Common myeloid progenitor, CD34-positive (primary cell): ENCODE measurements at regions of chr11 and their contacts with region 1.

Region 1: DNA sequence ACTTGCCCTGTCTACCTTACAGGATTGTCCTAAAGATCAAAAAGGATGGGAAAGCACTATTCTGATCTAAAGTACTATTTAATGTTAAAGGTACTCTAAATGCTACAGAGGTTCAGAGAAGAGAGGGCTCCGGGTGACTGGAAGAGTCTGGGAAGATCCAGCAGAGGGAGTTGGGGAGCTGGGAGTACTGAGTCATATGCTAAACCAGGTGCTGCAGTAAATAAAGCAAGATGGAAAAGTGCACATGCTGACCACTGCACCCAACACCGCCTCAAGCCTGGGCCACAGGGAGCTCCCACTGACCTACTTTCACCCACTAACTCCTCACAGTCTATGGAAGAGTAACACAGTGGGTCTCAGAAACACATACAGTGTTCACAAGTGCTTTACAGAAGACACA is 49.3 kb downstream of the WT1 start:
- DNase-seq: peak; percentile 28 to 39 (median 35)
- H3K4me3 ChIP-seq: peak overlapping the region in 2 of 7 experiments; percentile 42 to 44
- H3K27ac ChIP-seq: peak overlapping the region in 1 of 2 experiments; percentile 62
- H3K4me1 ChIP-seq: peaks cover 16 to 28% (median 19%) of the 10 kb centered on the region in 4 experiments
- H3K27me3 ChIP-seq: no peaks in the 10 kb centered on the region

Region 2: DNA sequence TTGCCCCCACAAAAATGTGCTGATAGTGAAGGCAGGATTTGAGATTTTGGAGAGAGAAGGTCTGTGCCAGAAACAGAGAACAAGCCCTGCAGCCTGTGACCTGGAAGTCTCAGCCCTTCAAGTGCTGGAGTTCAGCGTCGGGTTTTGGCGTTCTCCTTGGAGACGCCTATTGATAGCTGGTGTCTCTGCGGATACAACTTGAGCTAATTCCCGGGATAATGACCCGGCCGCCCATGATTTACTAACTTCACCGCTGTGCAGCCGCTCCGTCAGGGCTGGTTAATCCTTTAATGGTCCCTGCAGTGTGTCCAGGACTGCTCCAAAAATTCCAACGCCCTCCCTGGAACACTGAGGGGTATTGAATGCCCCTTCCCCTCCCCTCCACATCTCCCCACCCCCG is 27.3 kb before region 1 on chr11:
- CTCF ChIA-PET with region 1: no interaction called
- POLR2A ChIA-PET with region 1: no interaction called
- DNase-seq: no peak
- H3K4me3 ChIP-seq: no peak overlapping the region
- H3K27ac ChIP-seq: no peak overlapping the region
- H3K4me1 ChIP-seq: no peaks in the 10 kb centered on the region
- H3K27me3 ChIP-seq: peaks cover 0 to 5% (median 2%) of the 10 kb centered on the region in 5 experiments

Region 3: GRCh38 chr11:32374261-32374711 is 11.7 kb before region 1 on chr11:
- CTCF ChIA-PET with region 1: interaction called, 26 read pairs
- POLR2A ChIA-PET with region 1: no interaction called
- DNase-seq: peak; percentile 76 to 89 (median 86)
- H3K4me3 ChIP-seq: no peak overlapping the region
- H3K27ac ChIP-seq: no peak overlapping the region
- H3K4me1 ChIP-seq: peaks cover 0 to 3% (median 1%) of the 10 kb centered on the region in 4 experiments
- H3K27me3 ChIP-seq: no peaks in the 10 kb centered on the region

Region 4: DNA sequence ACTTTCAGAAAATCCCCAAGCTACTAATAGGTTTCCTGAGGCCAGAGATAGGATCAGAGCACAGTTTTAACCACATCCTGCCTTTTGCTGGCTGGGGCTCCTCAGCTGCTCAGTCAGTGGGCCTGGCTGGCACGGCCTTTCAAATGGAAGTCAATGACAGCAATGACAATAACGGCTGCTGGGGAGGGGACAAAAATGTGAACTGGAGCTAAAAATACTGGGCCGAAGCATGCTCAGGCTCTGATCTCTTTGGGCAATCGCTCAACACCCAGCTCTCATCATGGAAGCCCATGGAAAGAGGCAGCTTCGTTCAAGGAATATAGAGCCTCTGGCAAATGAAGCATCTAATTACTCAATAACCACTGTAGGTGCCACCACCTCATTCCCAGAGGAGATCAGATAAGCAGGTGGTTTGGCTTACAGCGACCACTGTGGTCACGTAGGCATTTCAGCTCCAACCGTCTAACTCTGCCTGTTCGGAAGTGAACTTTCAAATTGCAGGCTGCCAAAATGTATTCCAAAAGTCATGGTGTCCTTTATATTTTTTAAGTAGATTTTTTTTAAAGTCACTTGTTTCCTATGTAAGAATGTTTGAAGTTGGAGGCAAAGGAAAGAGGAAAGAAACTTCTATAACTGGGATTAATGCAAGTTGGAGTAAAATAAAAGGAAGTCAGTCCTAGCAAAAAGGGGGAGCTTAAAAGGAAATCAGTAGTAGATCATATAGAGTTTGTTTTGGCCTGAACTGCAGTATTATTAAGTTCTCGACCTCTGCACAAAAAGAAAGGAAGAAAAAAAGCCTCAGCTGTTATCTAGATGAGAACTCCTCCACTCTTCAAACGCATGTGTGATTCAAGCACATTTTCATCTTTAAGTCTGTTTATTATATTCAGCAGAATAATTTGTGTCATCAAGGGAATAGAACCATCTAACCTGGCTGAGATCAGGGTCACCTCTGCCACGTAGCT is 35.2 kb after region 1 on chr11:
- CTCF ChIA-PET with region 1: interaction called, 11 read pairs
- POLR2A ChIA-PET with region 1: interaction called, 16 read pairs
- DNase-seq: peak; percentile 92 to 97 (median 96)
- H3K4me3 ChIP-seq: peak overlapping the region in 5 of 7 experiments; percentile 4 to 59 (median 54)
- H3K27ac ChIP-seq: peak overlapping the region; percentile 79 to 92
- H3K4me1 ChIP-seq: peaks cover 27 to 90% (median 75%) of the 10 kb centered on the region in 4 experiments
- H3K27me3 ChIP-seq: peaks cover 0 to 3% (median 0%) of the 10 kb centered on the region in 5 experiments